ENCODE measurements at regions of chr18 and their contacts with region 1.

Region 1: GRCh38 chr18:3604498-3605408 is 154.8 kb downstream of the TGIF1 start:
- DNase-seq: peak; percentile 50
- H3K4me3 Mint-ChIP-seq: no peak overlapping the region
- H3K27ac Mint-ChIP-seq: no peak overlapping the region
- H3K4me1 Mint-ChIP-seq: peaks cover 18% of the 10 kb centered on the region
- H3K27me3 Mint-ChIP-seq: no peaks in the 10 kb centered on the region

Region 2: GRCh38 chr18:3261371-3262246 is 343.1 kb before region 1 on chr18 and contains the start of gene MYL12B:
- CTCF ChIA-PET with region 1: no interaction called
- POLR2A ChIA-PET with region 1: interaction called, 21 read pairs
- DNase-seq: peak; percentile 86
- H3K4me3 Mint-ChIP-seq: peak within 1 kb of the TSS; percentile 89
- H3K27ac Mint-ChIP-seq: peak within 1 kb of the TSS; percentile 99
- H3K4me1 Mint-ChIP-seq: peaks cover 71% of the 10 kb centered on the region
- H3K27me3 Mint-ChIP-seq: no peaks in the 10 kb centered on the region
- total RNA-seq, gene MYL12B: 371 to 378 TPM

Region 3: GRCh38 chr18:3623769-3624545 is 19.2 kb after region 1 on chr18:
- CTCF ChIA-PET with region 1: interaction called, 5 read pairs
- POLR2A ChIA-PET with region 1: interaction called, 25 read pairs
- DNase-seq: peak; percentile 31
- H3K4me3 Mint-ChIP-seq: peak overlapping the region; percentile 28
- H3K27ac Mint-ChIP-seq: peak overlapping the region; percentile 73
- H3K4me1 Mint-ChIP-seq: peaks cover 36% of the 10 kb centered on the region
- H3K27me3 Mint-ChIP-seq: no peaks in the 10 kb centered on the region

Measured in activated CD4-positive, alpha-beta memory T cell treated with anti-CD3 and anti-CD28 coated beads, Interleukin-2, amount 10 ng/mL, durations not matched to agents 7 days and 5 days (primary cell).